CD8-positive, alpha-beta T cell (primary cell): ENCODE measurements at regions of chr11 and their contacts with region 1.

Region 1: GRCh38 chr11:20415432-20415831 is 27.9 kb downstream of the PRMT3 start:
- DNase-seq: no peak
- ATAC-seq: no peak
- H3K4me3 ChIP-seq: no peak overlapping the region
- H3K4me3 Mint-ChIP-seq: no peak overlapping the region
- H3K27ac ChIP-seq: no peak overlapping the region
- H3K27ac Mint-ChIP-seq: no peak overlapping the region
- H3K4me1 ChIP-seq: no peaks in the 10 kb centered on the region
- H3K4me1 Mint-ChIP-seq: no peaks in the 10 kb centered on the region
- H3K27me3 ChIP-seq: no peaks in the 10 kb centered on the region
- H3K27me3 Mint-ChIP-seq: no peaks in the 10 kb centered on the region
- CTCF ChIP-seq: no peak

Region 2: DNA sequence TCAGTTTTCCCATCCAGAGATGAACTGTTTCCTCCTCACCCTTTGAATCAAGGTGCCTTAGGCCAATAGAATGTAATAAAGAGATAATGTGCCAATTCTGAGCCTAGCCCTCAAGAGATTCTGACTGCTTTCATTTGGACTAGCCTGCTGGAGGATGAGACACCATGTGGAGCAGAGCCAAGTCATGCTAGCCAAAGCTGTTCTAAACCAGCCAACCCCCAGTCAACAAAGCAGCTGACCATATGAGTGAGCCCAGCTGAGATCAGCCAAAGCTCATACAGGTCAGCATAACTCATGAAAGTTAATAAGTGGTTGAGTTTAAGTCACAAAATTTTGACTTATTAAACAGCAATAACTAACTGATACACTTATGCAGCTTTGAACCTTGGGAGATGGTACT is 188.5 kb before region 1 on chr11:
- CTCF ChIA-PET with region 1: no interaction called
- POLR2A ChIA-PET with region 1: no interaction called
- intact Hi-C with region 1: no loop called
- DNase-seq: no peak
- ATAC-seq: no peak
- H3K4me3 ChIP-seq: no peak overlapping the region
- H3K4me3 Mint-ChIP-seq: no peak overlapping the region
- H3K27ac ChIP-seq: no peak overlapping the region
- H3K27ac Mint-ChIP-seq: no peak overlapping the region
- H3K4me1 ChIP-seq: no peaks in the 10 kb centered on the region
- H3K4me1 Mint-ChIP-seq: no peaks in the 10 kb centered on the region
- H3K27me3 ChIP-seq: no peaks in the 10 kb centered on the region
- H3K27me3 Mint-ChIP-seq: peaks cover 19% of the 10 kb centered on the region
- CTCF ChIP-seq: no peak

Region 3: GRCh38 chr11:20397281-20397680 is 18.2 kb before region 1 on chr11:
- CTCF ChIA-PET with region 1: interaction called, 15 read pairs
- POLR2A ChIA-PET with region 1: no interaction called
- intact Hi-C with region 1: no loop called
- DNase-seq: peak in 4 of 9 experiments; percentile 16 to 61 (median 36)
- ATAC-seq: peak; percentile 87
- H3K4me3 ChIP-seq: no peak overlapping the region
- H3K4me3 Mint-ChIP-seq: no peak overlapping the region
- H3K27ac ChIP-seq: no peak overlapping the region
- H3K27ac Mint-ChIP-seq: no peak overlapping the region
- H3K4me1 ChIP-seq: no peaks in the 10 kb centered on the region
- H3K4me1 Mint-ChIP-seq: peaks cover 16% of the 10 kb centered on the region
- H3K27me3 ChIP-seq: no peaks in the 10 kb centered on the region
- H3K27me3 Mint-ChIP-seq: no peaks in the 10 kb centered on the region
- CTCF ChIP-seq: peak; percentile 54

Region 4: DNA sequence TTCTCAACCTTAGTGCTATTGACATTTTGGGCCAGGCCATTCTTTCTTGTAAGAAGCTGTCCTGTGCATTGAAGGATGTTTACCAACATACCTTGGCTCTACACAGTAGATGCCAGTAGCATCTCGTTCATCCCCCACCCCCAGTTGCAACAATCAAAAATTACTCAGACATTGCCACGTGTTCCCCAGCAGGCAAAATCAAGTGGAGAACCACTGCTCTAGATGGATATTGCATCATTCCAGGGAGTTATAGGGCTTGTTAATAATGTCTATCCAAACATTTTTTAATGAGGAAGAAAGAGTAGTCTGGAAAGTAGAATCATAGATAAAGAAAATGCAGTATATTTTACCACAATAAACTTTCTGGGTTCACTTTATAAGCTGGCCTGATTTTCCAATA is 36.1 kb after region 1 on chr11:
- CTCF ChIA-PET with region 1: no interaction called
- POLR2A ChIA-PET with region 1: no interaction called
- intact Hi-C with region 1: loop called in 1 of 2 experiments (anchors 5 kb)
- DNase-seq: no peak
- ATAC-seq: no peak
- H3K4me3 ChIP-seq: no peak overlapping the region
- H3K4me3 Mint-ChIP-seq: no peak overlapping the region
- H3K27ac ChIP-seq: no peak overlapping the region
- H3K27ac Mint-ChIP-seq: peak overlapping the region; percentile 55
- H3K4me1 ChIP-seq: no peaks in the 10 kb centered on the region
- H3K4me1 Mint-ChIP-seq: peaks cover 11% of the 10 kb centered on the region
- H3K27me3 ChIP-seq: no peaks in the 10 kb centered on the region
- H3K27me3 Mint-ChIP-seq: no peaks in the 10 kb centered on the region
- CTCF ChIP-seq: no peak

Region 5: DNA sequence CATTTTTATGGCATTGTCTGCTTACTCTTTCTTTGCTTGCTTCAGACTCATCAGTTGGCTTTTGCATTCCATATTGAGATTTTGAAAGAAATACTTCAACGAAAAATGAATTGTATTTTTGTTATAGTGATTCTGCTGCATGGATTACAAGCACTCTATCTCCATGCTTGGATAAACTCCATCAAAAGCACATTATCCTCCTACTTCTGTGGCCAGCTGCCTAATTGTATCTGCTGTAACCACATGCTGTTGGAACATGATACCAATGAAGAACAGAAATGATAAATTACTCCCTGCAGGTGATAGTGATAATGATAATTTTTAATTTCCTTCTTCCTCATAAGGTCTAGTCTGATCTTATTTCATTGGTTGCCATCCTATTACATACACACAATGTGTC is 72.9 kb after region 1 on chr11:
- CTCF ChIA-PET with region 1: no interaction called
- POLR2A ChIA-PET with region 1: no interaction called
- intact Hi-C with region 1: no loop called
- DNase-seq: no peak
- ATAC-seq: no peak
- H3K4me3 ChIP-seq: no peak overlapping the region
- H3K4me3 Mint-ChIP-seq: no peak overlapping the region
- H3K27ac ChIP-seq: no peak overlapping the region
- H3K27ac Mint-ChIP-seq: no peak overlapping the region
- H3K4me1 ChIP-seq: no peaks in the 10 kb centered on the region
- H3K4me1 Mint-ChIP-seq: peaks cover 3% of the 10 kb centered on the region
- H3K27me3 ChIP-seq: no peaks in the 10 kb centered on the region
- H3K27me3 Mint-ChIP-seq: no peaks in the 10 kb centered on the region
- CTCF ChIP-seq: no peak